ENCODE measurements at regions of chr17 and their contacts with region 1.

Region 1: GRCh38 chr17:1365445-1366039 is 34.5 kb downstream of the YWHAE start:
- DNase-seq: peak; percentile 86
- H3K4me3 Mint-ChIP-seq: no peak overlapping the region
- H3K27ac Mint-ChIP-seq: no peak overlapping the region
- H3K4me1 Mint-ChIP-seq: peaks cover 36% of the 10 kb centered on the region
- H3K27me3 Mint-ChIP-seq: no peaks in the 10 kb centered on the region
- CTCF ChIP-seq: peak; percentile 80

Region 2: DNA sequence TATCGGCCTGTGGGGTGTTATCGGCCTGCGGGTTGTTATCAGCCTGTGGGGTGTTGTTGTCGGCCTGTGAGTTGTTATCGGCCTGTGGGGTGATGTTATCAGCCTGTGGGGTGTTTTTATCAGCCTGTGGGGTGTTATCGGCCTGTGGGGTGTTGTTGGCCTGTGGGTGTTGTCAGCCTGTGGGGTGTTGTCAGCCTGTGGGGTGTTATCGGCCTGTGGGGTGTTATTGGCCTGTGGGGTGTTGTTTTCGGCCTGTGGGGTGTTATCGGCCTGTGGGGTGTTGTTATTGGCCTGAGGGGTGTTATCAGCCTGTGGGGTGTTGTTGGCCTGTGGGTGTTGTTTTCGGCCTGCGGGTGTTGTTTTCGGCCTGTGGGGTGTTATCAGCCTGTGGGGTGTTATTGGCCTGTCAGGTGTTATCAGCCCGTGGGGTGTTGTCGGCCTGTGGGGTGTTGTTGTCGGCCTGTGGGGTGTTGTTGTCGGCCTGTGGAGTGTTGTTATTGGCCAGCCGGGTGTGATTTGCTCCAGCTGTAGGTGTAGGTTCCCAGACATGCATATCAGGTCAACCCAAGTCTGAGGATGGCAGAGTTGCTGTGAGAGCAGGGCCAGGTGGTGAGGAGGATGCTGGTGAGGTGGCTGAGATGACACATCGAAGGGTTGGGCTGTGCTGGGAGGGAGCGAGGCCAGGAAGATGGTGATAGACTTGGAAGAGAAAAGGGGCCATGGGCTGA is 79.0 kb before region 1 on chr17:
- CTCF ChIA-PET with region 1: no interaction called
- POLR2A ChIA-PET with region 1: no interaction called
- intact Hi-C with region 1: no loop called
- DNase-seq: no peak
- H3K4me3 Mint-ChIP-seq: no peak overlapping the region
- H3K27ac Mint-ChIP-seq: no peak overlapping the region
- H3K4me1 Mint-ChIP-seq: no peaks in the 10 kb centered on the region
- H3K27me3 Mint-ChIP-seq: no peaks in the 10 kb centered on the region
- CTCF ChIP-seq: no peak

Region 3: DNA sequence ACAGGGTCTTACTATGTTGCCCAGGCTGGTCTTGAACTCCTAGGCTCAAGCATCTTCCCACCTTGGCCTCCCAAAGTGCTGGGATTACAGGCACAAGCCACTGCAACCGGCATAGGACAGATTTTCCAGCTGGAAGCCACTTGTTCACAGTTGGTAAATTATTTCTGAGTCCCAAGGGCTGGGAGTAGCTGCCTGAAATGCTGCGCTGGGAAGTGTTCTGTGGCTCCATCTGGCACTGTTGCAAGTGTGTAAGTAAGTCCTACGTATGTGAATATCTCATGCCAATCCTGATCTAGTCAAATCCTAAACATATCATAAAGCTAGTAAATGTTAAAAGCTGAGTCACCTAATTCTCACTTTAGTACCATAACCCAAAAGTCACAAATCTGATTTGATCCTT is 13.6 kb before region 1 on chr17:
- CTCF ChIA-PET with region 1: interaction called, 4 read pairs
- POLR2A ChIA-PET with region 1: interaction called, 14 read pairs
- intact Hi-C with region 1: no loop called
- DNase-seq: no peak
- H3K4me3 Mint-ChIP-seq: no peak overlapping the region
- H3K27ac Mint-ChIP-seq: no peak overlapping the region
- H3K4me1 Mint-ChIP-seq: peaks cover 7% of the 10 kb centered on the region
- H3K27me3 Mint-ChIP-seq: no peaks in the 10 kb centered on the region
- CTCF ChIP-seq: no peak

Region 4: GRCh38 chr17:1390433-1391367 is 25.2 kb after region 1 on chr17:
- CTCF ChIA-PET with region 1: interaction called, 28 read pairs
- POLR2A ChIA-PET with region 1: interaction called, 10 read pairs
- intact Hi-C with region 1: no loop called
- DNase-seq: no peak
- H3K4me3 Mint-ChIP-seq: no peak overlapping the region
- H3K27ac Mint-ChIP-seq: no peak overlapping the region
- H3K4me1 Mint-ChIP-seq: peaks cover 9% of the 10 kb centered on the region
- H3K27me3 Mint-ChIP-seq: no peaks in the 10 kb centered on the region
- CTCF ChIP-seq: no peak

Region 5: GRCh38 chr17:1399679-1400512 is 34.4 kb after region 1 on chr17 and contains the start of gene YWHAE:
- CTCF ChIA-PET with region 1: interaction called, 11 read pairs
- POLR2A ChIA-PET with region 1: interaction called, 55 read pairs
- intact Hi-C with region 1: loop called (anchors 5 kb)
- DNase-seq: peak; percentile 96
- H3K4me3 Mint-ChIP-seq: peak within 1 kb of the TSS; percentile 92
- H3K27ac Mint-ChIP-seq: peak within 1 kb of the TSS; percentile 100
- H3K4me1 Mint-ChIP-seq: peaks cover 11% of the 10 kb centered on the region
- H3K27me3 Mint-ChIP-seq: no peaks in the 10 kb centered on the region
- CTCF ChIP-seq: no peak
- total RNA-seq, gene YWHAE: 813 and 886 TPM in 2 replicates

Region 6: DNA sequence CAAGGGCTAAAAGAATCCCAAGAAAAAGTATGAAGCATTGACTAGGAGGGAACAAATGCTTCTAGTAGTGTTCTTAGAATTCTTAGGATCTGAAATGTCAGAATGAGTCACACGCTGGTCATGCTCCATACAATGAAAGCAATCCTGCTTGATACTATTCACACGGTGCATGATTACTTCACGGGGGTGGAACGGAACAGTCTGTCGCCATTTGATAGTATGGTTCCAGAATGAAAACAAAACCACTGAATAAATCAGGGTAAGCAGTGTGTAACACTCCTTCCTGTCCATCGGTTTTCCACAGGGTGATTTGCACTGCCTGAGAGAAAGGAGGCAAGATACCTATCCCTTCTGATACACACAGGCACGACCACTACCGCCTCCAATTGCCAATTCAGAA is 57.4 kb after region 1 on chr17:
- CTCF ChIA-PET with region 1: interaction called, 7 read pairs
- POLR2A ChIA-PET with region 1: interaction called, 12 read pairs
- intact Hi-C with region 1: loop called (anchors 2 kb)
- DNase-seq: peak; percentile 94
- H3K4me3 Mint-ChIP-seq: peak overlapping the region; percentile 58
- H3K27ac Mint-ChIP-seq: peak overlapping the region; percentile 77
- H3K4me1 Mint-ChIP-seq: peaks cover 23% of the 10 kb centered on the region
- H3K27me3 Mint-ChIP-seq: no peaks in the 10 kb centered on the region
- CTCF ChIP-seq: no peak

Region 7: GRCh38 chr17:1455797-1456599 is 90.5 kb after region 1 on chr17 and contains the start of gene CRK:
- CTCF ChIA-PET with region 1: interaction called, 6 read pairs
- POLR2A ChIA-PET with region 1: interaction called, 25 read pairs
- intact Hi-C with region 1: loop called (anchors 1 kb)
- DNase-seq: peak; percentile 96
- H3K4me3 Mint-ChIP-seq: peak within 1 kb of the TSS; percentile 85
- H3K27ac Mint-ChIP-seq: peak within 1 kb of the TSS; percentile 76
- H3K4me1 Mint-ChIP-seq: peaks cover 16% of the 10 kb centered on the region
- H3K27me3 Mint-ChIP-seq: no peaks in the 10 kb centered on the region
- CTCF ChIP-seq: no peak
- total RNA-seq, gene CRK: 70.6 and 82.9 TPM in 2 replicates

Measured in MCF 10A (cell line).